Activated CD8-positive, alpha-beta T cell treated with anti-CD3 and anti-CD28 coated beads for 36 hours (primary cell): ENCODE measurements at regions of chr6 and their contacts with region 1.

Region 1: GRCh38 chr6:26054857-26055669 is 32.2 kb upstream of the HFE start:
- DNase-seq: peak; percentile 94
- ATAC-seq: peak; percentile 73
- H3K4me3 Mint-ChIP-seq: peak overlapping the region; percentile 92
- H3K27ac Mint-ChIP-seq: peak overlapping the region; percentile 99
- H3K4me1 Mint-ChIP-seq: peaks cover 17% of the 10 kb centered on the region
- H3K27me3 Mint-ChIP-seq: peaks cover 3% of the 10 kb centered on the region
- CTCF ChIP-seq: no peak

Region 2: GRCh38 chr6:26065952-26066380 is 10.9 kb after region 1 on chr6:
- CTCF ChIA-PET with region 1: interaction called, 6 read pairs
- POLR2A ChIA-PET with region 1: interaction called, 14 read pairs
- intact Hi-C with region 1: no loop called
- DNase-seq: peak; percentile 73
- ATAC-seq: peak; percentile 95
- H3K4me3 Mint-ChIP-seq: no peak overlapping the region
- H3K27ac Mint-ChIP-seq: no peak overlapping the region
- H3K4me1 Mint-ChIP-seq: no peaks in the 10 kb centered on the region
- H3K27me3 Mint-ChIP-seq: no peaks in the 10 kb centered on the region
- CTCF ChIP-seq: peak; percentile 79

Region 3: GRCh38 chr6:26071135-26071534 is 16.1 kb after region 1 on chr6:
- CTCF ChIA-PET with region 1: interaction called, 6 read pairs
- POLR2A ChIA-PET with region 1: interaction called, 12 read pairs
- intact Hi-C with region 1: no loop called
- DNase-seq: no peak
- ATAC-seq: no peak
- H3K4me3 Mint-ChIP-seq: no peak overlapping the region
- H3K27ac Mint-ChIP-seq: no peak overlapping the region
- H3K4me1 Mint-ChIP-seq: no peaks in the 10 kb centered on the region
- H3K27me3 Mint-ChIP-seq: peaks cover 3% of the 10 kb centered on the region
- CTCF ChIP-seq: no peak

Region 4: GRCh38 chr6:26087284-26088115 is 32.4 kb after region 1 on chr6 and contains the start of gene HFE:
- CTCF ChIA-PET with region 1: interaction called, 841 read pairs
- POLR2A ChIA-PET with region 1: interaction called, 10 read pairs
- intact Hi-C with region 1: no loop called
- DNase-seq: peak; percentile 41
- ATAC-seq: peak; percentile 22
- H3K4me3 Mint-ChIP-seq: peak within 1 kb of the TSS; percentile 74
- H3K27ac Mint-ChIP-seq: peak within 1 kb of the TSS; percentile 69
- H3K4me1 Mint-ChIP-seq: peaks cover 33% of the 10 kb centered on the region
- H3K27me3 Mint-ChIP-seq: no peaks in the 10 kb centered on the region
- CTCF ChIP-seq: no peak
- total RNA-seq, gene HFE: 0.25 to 0.56 TPM

Region 5: GRCh38 chr6:26103770-26104456 is 48.9 kb after region 1 on chr6:
- CTCF ChIA-PET with region 1: interaction called, 841 read pairs
- POLR2A ChIA-PET with region 1: interaction called, 103 read pairs
- intact Hi-C with region 1: loop called (anchors 2 kb)
- DNase-seq: peak; percentile 90
- ATAC-seq: peak; percentile 87
- H3K4me3 Mint-ChIP-seq: peak overlapping the region; percentile 85
- H3K27ac Mint-ChIP-seq: peak overlapping the region; percentile 98
- H3K4me1 Mint-ChIP-seq: peaks cover 15% of the 10 kb centered on the region
- H3K27me3 Mint-ChIP-seq: peaks cover 2% of the 10 kb centered on the region
- CTCF ChIP-seq: peak; percentile 46

Region 6: DNA sequence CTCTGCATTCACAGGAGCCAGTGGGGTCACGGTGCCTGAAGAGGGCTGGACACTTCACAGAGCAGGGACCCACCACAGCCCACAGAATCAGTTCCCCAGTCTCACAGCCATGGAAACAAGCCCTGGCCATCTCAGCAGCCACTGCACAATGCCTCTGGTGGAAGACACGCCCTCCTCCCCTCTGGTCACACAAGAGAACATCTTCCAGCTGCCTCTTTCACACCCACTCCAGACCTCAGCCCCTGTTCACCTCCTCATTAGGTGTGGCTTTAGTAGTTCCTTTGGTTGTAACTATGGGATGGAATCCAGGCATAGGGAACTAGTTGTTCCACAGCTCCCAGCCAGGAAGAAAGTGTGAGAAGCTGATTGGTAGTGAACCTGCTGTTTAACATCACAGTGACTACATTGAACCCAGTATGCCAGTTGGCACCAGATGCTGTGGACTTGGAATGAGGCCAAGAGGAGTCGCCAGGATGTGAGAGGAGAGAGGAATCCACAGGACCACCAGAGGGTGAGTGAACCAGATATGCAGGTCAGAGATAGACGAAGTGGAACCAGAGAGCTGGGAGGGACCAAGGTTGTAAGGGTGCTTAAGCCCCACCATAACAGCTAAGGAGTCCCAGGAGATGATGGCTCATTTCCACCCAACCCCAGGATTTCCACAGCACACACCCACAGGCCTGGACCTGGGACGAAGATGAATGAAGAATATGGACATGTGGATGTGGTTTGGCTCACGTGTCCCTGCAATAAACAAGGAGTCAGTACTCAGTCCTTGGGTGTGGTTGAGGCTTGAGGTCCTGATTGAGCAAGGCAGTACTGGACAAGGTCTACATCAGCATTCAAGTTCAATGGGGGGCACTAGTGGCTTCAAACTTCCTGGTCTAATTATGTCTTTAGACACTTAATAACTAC is 376.5 kb after region 1 on chr6:
- CTCF ChIA-PET with region 1: no interaction called
- POLR2A ChIA-PET with region 1: no interaction called
- intact Hi-C with region 1: no loop called
- DNase-seq: no peak
- ATAC-seq: no peak
- H3K4me3 Mint-ChIP-seq: no peak overlapping the region
- H3K27ac Mint-ChIP-seq: no peak overlapping the region
- H3K4me1 Mint-ChIP-seq: no peaks in the 10 kb centered on the region
- H3K27me3 Mint-ChIP-seq: no peaks in the 10 kb centered on the region
- CTCF ChIP-seq: no peak